ENCODE measurements at regions of chr5 and their contacts with region 1.

Region 1: DNA sequence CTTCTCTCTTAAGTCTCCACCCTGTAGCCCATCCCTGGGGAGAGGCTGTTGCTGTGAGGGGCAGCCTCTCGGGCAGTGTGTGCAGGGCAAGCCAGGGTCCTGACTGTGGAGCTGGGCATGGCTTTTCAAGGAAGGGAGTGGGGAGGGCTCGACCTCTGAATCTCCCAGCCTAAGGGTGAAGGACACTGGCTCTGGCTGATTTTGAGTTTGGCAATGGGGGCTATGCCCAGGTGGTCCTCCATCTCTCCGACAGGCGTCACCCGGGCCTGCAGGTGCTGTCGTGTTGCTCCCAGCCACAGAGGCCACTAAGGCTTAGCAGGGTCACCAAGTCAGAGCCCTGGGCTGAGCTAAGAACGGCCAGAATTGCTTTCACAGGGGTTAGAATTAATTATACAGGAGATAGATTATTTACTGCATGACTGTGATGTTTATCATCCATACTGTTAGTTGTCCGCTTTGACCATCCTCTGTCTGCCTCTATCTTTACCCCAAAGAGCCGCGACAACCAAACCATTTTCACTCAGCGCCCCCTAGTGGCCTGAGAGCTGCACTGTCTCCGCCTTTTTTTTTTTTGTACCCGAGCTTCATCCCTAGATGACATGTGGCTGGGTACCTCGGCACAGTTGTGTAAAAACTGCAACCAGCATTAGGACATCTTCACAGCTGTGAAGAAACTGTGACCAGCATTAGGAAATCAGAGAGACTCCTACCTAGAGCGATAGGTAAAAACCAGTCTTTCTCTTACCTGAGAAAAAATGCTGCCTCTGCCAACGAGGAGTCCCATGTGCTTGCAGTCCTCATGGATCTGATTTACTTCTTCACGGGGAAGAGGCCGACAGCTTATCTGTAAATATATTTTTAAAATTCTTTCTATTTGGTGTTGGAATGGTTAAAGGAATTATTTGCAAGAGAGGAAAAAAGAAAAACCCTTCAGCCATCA is 44.5 kb downstream of the AGXT2 start:
- DNase-seq: peak; percentile 77
- ATAC-seq: peak; percentile 64
- H3K4me3 ChIP-seq: no peak overlapping the region
- H3K27ac ChIP-seq: no peak overlapping the region
- H3K4me1 ChIP-seq: no peaks in the 10 kb centered on the region
- H3K27me3 ChIP-seq: no peaks in the 10 kb centered on the region; the same call in 1 of the 2 replicates
- CTCF ChIP-seq: peak; percentile 94

Region 2: DNA sequence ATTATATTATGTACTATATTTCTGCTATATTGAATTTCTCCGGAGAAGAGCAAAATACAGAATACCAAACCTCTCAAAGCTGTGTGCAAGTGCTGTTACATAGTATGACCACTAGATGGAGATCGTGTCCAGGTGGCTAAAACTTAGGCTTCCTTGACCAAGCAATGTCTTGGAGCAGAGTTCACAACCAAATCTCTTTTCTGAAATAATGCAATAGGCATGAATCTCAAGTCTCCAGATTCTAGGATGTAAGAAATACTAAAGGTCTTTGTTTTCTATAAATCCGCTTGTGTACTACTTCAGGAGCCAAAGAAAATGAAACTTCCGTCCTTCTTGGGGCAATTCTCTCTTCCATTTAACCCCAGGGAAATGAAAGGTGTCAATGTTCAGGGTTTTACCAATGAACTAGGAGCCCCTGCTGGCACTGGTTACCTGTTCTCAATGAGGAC is 528.7 kb before region 1 on chr5:
- CTCF ChIA-PET with region 1: interaction called, 6 read pairs
- POLR2A ChIA-PET with region 1: no interaction called
- intact Hi-C with region 1: loop called (anchors 1 kb)
- DNase-seq: peak; percentile 73
- ATAC-seq: peak; percentile 84
- H3K4me3 ChIP-seq: no peak overlapping the region
- H3K27ac ChIP-seq: no peak overlapping the region
- H3K4me1 ChIP-seq: peaks cover 4% of the 10 kb centered on the region; the same call in 1 of the 2 replicates
- H3K27me3 ChIP-seq: no peaks in the 10 kb centered on the region
- CTCF ChIP-seq: peak; percentile 97

Region 3: DNA sequence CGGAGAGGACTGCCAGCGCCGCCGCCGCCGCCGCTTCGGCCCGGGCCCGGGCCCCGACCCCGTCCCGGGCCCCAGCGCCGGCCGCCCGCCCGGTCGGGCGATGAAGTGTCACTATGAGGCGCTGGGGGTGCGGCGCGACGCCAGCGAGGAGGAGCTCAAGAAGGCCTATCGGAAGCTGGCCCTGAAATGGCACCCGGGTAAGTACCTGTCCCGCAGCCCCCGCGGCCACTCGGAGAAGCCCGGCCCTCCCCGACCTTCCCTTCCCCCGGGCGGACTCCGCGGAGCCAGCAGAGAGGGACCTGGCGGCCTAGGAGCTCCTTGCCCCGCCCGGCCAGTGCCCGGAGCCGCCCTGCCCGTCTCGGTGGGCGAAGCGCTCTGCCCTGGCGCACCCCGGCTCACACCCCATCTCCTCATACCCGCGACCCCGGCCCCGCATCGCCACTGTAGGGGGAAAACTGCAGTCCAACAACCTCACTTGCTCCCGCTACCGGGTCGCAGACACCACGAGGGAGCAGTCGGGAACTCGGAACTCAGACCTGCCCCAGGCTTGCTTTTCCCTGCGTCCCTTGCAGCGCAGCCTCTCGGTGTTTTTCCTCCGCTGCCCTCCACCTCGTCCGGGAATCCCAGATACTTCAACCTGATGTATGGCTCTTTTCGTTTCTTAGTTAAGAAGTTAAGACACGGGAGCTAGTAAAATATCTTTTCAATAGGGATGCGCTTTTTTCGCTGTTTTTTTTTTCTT is 73.4 kb before region 1 on chr5:
- CTCF ChIA-PET with region 1: interaction called, 4 read pairs
- POLR2A ChIA-PET with region 1: no interaction called
- intact Hi-C with region 1: loop called (anchors 2 kb)
- DNase-seq: peak; percentile 80
- ATAC-seq: peak; percentile 66
- H3K4me3 ChIP-seq: peak overlapping the region; percentile 91
- H3K27ac ChIP-seq: peak overlapping the region; percentile 48
- H3K4me1 ChIP-seq: peaks cover 14% of the 10 kb centered on the region
- H3K27me3 ChIP-seq: no peaks in the 10 kb centered on the region
- CTCF ChIP-seq: no peak

Region 4: DNA sequence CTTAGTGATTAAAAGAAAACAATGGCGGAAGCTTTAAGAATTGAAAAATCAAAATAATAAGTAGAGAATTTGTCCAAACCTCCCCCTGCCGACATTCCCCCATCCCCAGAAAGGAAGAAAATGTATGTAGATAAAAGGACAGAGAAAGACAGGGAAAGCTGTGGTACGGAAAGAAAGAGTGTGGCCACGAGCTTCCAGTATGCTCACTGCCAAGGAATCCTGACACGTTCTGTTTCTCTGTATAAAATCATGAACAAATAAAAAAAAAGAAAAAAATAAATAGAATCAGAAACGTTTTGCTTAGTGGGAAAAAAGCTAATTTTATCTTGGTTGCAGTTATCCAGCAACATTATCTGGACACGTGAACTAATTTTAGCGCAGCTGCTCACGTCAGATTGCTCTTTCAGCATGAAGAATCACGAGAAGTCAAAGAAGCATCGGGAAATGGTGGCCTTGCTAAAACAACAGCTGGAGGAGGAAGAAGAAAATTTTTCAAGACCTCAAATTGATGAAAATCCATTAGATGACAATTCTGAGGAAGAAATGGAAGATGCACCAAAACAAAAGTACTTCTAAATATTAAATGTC is 58.7 kb before region 1 on chr5:
- CTCF ChIA-PET with region 1: no interaction called
- POLR2A ChIA-PET with region 1: no interaction called
- intact Hi-C with region 1: no loop called
- DNase-seq: no peak
- ATAC-seq: no peak
- H3K4me3 ChIP-seq: no peak overlapping the region
- H3K27ac ChIP-seq: no peak overlapping the region
- H3K4me1 ChIP-seq: no peaks in the 10 kb centered on the region
- H3K27me3 ChIP-seq: no peaks in the 10 kb centered on the region
- CTCF ChIP-seq: no peak

Region 5: GRCh38 chr5:34957857-34958690 is 45.2 kb before region 1 on chr5:
- CTCF ChIA-PET with region 1: interaction called, 3 read pairs
- POLR2A ChIA-PET with region 1: no interaction called
- intact Hi-C with region 1: loop called (anchors 2 kb)
- DNase-seq: peak; percentile 56
- ATAC-seq: peak; percentile 74
- H3K4me3 ChIP-seq: no peak overlapping the region
- H3K27ac ChIP-seq: no peak overlapping the region
- H3K4me1 ChIP-seq: peaks cover 13% of the 10 kb centered on the region
- H3K27me3 ChIP-seq: no peaks in the 10 kb centered on the region
- CTCF ChIP-seq: peak; percentile 77

Measured in PC-3 (cell line).